Tibial artery (tissue), 4 donors: ENCODE measurements at regions of chr20 and their contacts with region 1.

Region 1: GRCh38 chr20:8156235-8157079 is 24.4 kb downstream of the PLCB1 start:
- DNase-seq: no peak
- H3K4me3 ChIP-seq: no peak overlapping the region
- H3K27ac ChIP-seq: peak overlapping the region in 1 of 2 donors; percentile 20
- H3K4me1 ChIP-seq: peaks cover 0 to 39% (median 11%) of the 10 kb centered on the region in 4 donors
- H3K27me3 ChIP-seq: no peaks in the 10 kb centered on the region
- CTCF ChIP-seq: no peak

Region 2: GRCh38 chr20:7637184-7637583 is 519.3 kb before region 1 on chr20:
- intact Hi-C with region 1: no loop called
- DNase-seq: no peak
- H3K4me3 ChIP-seq: no peak overlapping the region
- H3K27ac ChIP-seq: no peak overlapping the region
- H3K4me1 ChIP-seq: no peaks in the 10 kb centered on the region
- H3K27me3 ChIP-seq: no peaks in the 10 kb centered on the region
- CTCF ChIP-seq: no peak

Region 3: GRCh38 chr20:8205996-8206395 is 49.5 kb after region 1 on chr20:
- intact Hi-C with region 1: loop called (anchors 1 kb)
- DNase-seq: no peak
- H3K4me3 ChIP-seq: no peak overlapping the region
- H3K27ac ChIP-seq: no peak overlapping the region
- H3K4me1 ChIP-seq: no peaks in the 10 kb centered on the region
- H3K27me3 ChIP-seq: no peaks in the 10 kb centered on the region
- CTCF ChIP-seq: no peak